HepG2 (cell line): ENCODE measurements at regions of chr6 and their contacts with region 1.

Region 1: GRCh38 chr6:50655848-50656453 is 57.4 kb upstream of the TFAP2D start:
- DNase-seq: peak; percentile 16
- ATAC-seq: peak; percentile 57
- H3K4me3 ChIP-seq: no peak overlapping the region
- H3K27ac ChIP-seq: no peak overlapping the region
- H3K4me1 ChIP-seq: peaks cover 6% of the 10 kb centered on the region; the same call in 1 of the 2 replicates
- H3K27me3 ChIP-seq: no peaks in the 10 kb centered on the region
- CTCF ChIP-seq: peak; percentile 57
- EP300 ChIP-seq: no peak
- POLR2A ChIP-seq: no peak
- RAD21 ChIP-seq: no peak

Region 2: DNA sequence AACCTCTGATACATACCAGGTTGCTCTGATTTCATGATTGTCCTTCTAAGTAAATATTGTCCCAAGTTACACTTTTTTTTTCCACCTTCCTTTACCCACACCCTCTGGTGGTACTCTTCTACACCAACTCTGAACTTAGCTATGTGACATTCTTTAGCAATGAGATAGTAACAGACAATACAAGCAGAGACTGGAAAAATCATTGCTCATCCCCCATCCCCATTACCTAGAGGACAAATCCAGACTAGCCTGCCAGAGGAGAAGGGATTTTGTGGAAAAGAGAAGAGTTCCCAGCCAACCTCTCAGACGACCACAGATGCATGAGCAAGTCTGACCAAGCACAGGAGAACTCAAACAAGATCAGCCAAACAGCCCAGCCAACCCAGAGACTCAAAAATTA is 130.0 kb after region 1 on chr6:
- CTCF ChIA-PET with region 1: interaction called, 14 read pairs
- POLR2A ChIA-PET with region 1: no interaction called
- in situ Hi-C with region 1: loop called (anchors 10 kb)
- intact Hi-C with region 1: no loop called
- DNase-seq: no peak
- ATAC-seq: no peak
- H3K4me3 ChIP-seq: no peak overlapping the region
- H3K27ac ChIP-seq: no peak overlapping the region
- H3K4me1 ChIP-seq: no peaks in the 10 kb centered on the region
- H3K27me3 ChIP-seq: no peaks in the 10 kb centered on the region
- CTCF ChIP-seq: no peak
- EP300 ChIP-seq: no peak
- POLR2A ChIP-seq: no peak
- RAD21 ChIP-seq: no peak

Region 3: GRCh38 chr6:50791900-50792508 is 136.1 kb after region 1 on chr6:
- CTCF ChIA-PET with region 1: interaction called, 14 read pairs
- POLR2A ChIA-PET with region 1: no interaction called
- in situ Hi-C with region 1: loop called (anchors 10 kb)
- intact Hi-C with region 1: loop called (anchors 1 kb)
- DNase-seq: peak; percentile 61
- ATAC-seq: peak; percentile 86
- H3K4me3 ChIP-seq: no peak overlapping the region
- H3K27ac ChIP-seq: no peak overlapping the region
- H3K4me1 ChIP-seq: no peaks in the 10 kb centered on the region
- H3K27me3 ChIP-seq: no peaks in the 10 kb centered on the region
- CTCF ChIP-seq: peak; percentile 82
- EP300 ChIP-seq: no peak
- POLR2A ChIP-seq: no peak
- RAD21 ChIP-seq: 0 out of 2 replicates have a peak, but pooled peaks have one; percentile 40